Activated T-helper 2 cell treated with anti-CD3 and anti-CD28 coated beads, Interferon-gamma antibody, Interleukin-2, Interleukin-4, amounts not matched to agents 10 μg/mL and 5 μg/mL and 100 μg/mL, durations not matched to agents 14 hours and 24 hours and 36 hours (primary cell): ENCODE measurements at regions of chr2 and their contacts with region 1.

Region 1: GRCh38 chr2:28583899-28584553 is 88.2 kb downstream of the PLB1 start:
- DNase-seq: peak; percentile 36
- H3K4me3 Mint-ChIP-seq: no peak overlapping the region
- H3K27ac Mint-ChIP-seq: peak overlapping the region; percentile 72
- H3K4me1 Mint-ChIP-seq: peaks cover 43% of the 10 kb centered on the region
- H3K27me3 Mint-ChIP-seq: no peaks in the 10 kb centered on the region

Region 2: DNA sequence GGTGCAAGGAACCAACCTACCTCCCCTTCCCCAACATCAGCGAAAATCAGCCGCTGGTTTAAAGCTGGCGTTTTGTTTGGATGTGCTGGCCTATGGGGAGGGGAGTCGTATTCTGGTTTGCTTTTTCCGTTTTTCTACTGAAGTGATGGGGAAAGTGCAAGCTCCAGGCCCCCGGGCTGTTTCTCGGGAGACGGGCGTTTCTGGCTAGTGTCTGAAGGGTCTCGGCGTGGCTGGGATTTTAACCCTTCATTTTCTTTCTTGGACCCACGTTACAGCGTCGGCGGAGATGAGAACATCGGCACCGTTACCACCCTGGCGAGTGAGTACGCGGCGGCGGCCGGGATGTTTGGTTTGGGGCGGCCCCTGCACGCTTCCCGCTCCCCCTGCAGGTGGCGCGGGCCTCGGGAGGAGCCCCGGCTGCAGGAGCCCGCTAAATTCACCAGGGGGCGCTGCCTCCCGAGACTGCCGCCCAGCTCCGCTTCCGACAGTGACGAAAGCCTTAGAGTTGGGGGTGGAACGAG is 17.4 kb before region 1 on chr2:
- intact Hi-C with region 1: loop called (anchors 2 kb)
- DNase-seq: peak; percentile 85
- H3K4me3 Mint-ChIP-seq: peak overlapping the region; percentile 87
- H3K27ac Mint-ChIP-seq: peak overlapping the region; percentile 82
- H3K4me1 Mint-ChIP-seq: peaks cover 19% of the 10 kb centered on the region
- H3K27me3 Mint-ChIP-seq: peaks cover 1% of the 10 kb centered on the region

Region 3: DNA sequence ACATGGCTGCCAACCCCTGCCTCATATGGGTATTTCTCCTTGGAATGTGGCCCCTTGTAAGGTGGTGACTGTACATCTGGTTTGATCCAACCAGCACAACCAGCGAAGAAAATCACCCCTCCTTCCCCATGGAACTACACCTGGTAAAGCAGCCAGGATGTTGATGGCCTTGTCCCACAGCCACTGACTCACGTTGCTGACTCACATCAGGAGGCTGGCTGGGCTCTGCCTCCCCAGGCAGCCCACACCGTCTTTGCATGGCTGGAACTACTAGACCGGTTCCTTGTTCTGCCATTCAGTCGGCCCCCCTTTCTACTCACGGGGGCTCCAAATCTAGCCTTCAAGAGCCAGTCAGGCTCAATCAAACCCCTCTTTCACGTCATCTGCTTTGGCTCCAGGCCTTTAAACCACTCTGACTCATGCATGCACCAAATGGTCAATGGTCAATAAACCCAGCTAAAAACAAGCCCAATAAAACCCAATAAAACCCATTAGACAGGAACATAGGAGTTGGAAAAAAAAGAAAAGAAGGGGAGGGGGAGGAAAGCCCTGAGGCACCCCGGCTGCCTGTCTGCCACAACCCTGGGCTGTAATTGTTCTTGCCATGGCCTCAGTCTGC is 26.7 kb after region 1 on chr2:
- intact Hi-C with region 1: loop called (anchors 2 kb)
- DNase-seq: no peak
- H3K4me3 Mint-ChIP-seq: no peak overlapping the region
- H3K27ac Mint-ChIP-seq: peak overlapping the region; percentile 10
- H3K4me1 Mint-ChIP-seq: peaks cover 21% of the 10 kb centered on the region
- H3K27me3 Mint-ChIP-seq: no peaks in the 10 kb centered on the region

Region 4: DNA sequence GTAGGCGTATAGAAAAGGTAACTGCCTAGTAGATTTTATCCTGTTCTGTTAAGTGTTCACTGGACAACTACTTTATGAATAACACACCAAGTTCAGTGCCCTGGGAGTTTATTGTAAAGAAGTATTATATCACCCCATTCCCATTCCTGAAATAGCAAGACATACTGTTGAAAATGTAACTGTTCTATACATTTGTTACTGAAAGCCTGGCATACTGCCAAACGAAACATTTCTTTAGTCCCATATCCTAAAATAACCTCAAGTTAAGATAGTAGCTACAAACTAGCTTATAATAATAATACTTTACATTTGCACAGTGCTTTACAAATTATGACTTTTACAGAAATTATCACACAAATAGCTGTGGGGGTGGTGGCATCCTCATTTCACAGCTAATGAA is 251.8 kb after region 1 on chr2:
- intact Hi-C with region 1: no loop called
- DNase-seq: no peak
- H3K4me3 Mint-ChIP-seq: no peak overlapping the region
- H3K27ac Mint-ChIP-seq: no peak overlapping the region
- H3K4me1 Mint-ChIP-seq: no peaks in the 10 kb centered on the region
- H3K27me3 Mint-ChIP-seq: peaks cover 1% of the 10 kb centered on the region